ENCODE measurements at regions of chr2 and their contacts with region 1.

Region 1: DNA sequence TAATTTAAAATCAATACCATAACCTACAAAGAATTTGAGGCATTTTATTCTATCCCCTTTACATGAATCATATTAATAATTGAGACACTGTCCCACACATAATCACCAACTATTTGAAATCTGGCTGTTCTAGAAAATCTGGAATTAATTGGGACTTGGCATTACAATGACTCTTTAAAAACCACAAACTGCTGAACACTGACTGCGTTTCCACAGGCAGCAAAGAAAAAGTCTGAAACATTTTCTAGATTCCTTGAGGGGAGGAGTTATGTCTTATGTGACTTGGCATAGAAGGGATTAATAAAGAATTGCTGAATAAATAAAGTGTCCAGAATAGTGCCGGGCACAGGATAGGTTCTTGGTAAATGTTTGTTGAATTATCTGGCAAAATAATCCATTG is 61.4 kb downstream of the GPR39 start:
- DNase-seq: no peak
- H3K4me3 ChIP-seq: no peak overlapping the region
- H3K27ac ChIP-seq: no peak overlapping the region
- H3K4me1 ChIP-seq: no peaks in the 10 kb centered on the region
- H3K27me3 ChIP-seq: no peaks in the 10 kb centered on the region
- CTCF ChIP-seq: no peak
- EP300 ChIP-seq: no peak
- POLR2A ChIP-seq: no peak

Region 2: DNA sequence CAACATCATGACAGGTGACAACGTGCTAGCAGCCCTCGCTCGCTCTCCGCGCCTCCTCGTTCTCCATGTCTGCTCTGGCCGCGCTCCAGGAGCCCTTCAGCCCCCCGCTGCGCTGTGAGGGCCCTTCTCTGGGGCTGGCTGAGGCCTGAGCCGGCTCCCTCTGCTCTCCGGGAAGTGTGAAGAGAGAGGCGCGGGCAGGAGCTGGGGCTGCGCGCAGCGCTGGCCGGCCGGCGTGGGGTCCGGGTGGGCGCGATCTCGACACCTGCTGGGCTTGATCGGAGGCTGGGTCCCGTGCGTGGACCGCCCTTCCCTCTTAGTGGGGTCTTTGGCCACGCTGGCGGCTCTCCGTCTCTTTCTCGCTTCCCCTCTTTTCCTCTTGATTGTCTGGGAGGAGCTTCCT is 511.7 kb before region 1 on chr2:
- in situ Hi-C with region 1: no loop called
- intact Hi-C with region 1: no loop called
- DNase-seq: no peak
- H3K4me3 ChIP-seq: no peak overlapping the region
- H3K27ac ChIP-seq: no peak overlapping the region
- H3K4me1 ChIP-seq: no peaks in the 10 kb centered on the region
- H3K27me3 ChIP-seq: no peaks in the 10 kb centered on the region
- CTCF ChIP-seq: no peak
- EP300 ChIP-seq: no peak
- POLR2A ChIP-seq: no peak

Region 3: DNA sequence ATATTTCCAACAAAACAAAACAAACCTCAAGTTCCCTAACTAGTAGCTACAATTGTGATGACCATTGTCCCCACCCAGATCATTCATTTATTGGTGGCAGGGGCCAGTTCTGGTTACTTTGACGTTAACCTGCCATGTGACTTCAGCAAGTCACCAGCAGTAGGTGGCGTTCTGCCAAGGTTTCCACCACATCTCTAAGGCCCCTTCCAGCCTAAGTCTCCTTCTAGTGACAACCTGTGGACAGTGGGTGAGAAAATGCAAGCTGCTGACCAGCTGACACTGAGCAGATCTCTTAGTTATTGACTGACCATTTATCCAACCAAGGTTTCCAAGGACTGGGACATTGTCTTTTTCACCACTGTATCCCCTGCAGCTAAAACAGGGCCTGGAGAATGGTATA is 37.0 kb after region 1 on chr2:
- in situ Hi-C with region 1: no loop called
- intact Hi-C with region 1: loop called (anchors 1 kb)
- DNase-seq: no peak
- H3K4me3 ChIP-seq: no peak overlapping the region
- H3K27ac ChIP-seq: no peak overlapping the region
- H3K4me1 ChIP-seq: no peaks in the 10 kb centered on the region
- H3K27me3 ChIP-seq: no peaks in the 10 kb centered on the region
- CTCF ChIP-seq: no peak
- EP300 ChIP-seq: no peak
- POLR2A ChIP-seq: no peak

Region 4: GRCh38 chr2:132790207-132790785 is 312.3 kb after region 1 on chr2:
- in situ Hi-C with region 1: no loop called
- intact Hi-C with region 1: no loop called
- DNase-seq: no peak
- H3K4me3 ChIP-seq: no peak overlapping the region
- H3K27ac ChIP-seq: no peak overlapping the region
- H3K4me1 ChIP-seq: no peaks in the 10 kb centered on the region
- H3K27me3 ChIP-seq: no peaks in the 10 kb centered on the region
- CTCF ChIP-seq: no peak
- EP300 ChIP-seq: no peak
- POLR2A ChIP-seq: no peak

Region 5: DNA sequence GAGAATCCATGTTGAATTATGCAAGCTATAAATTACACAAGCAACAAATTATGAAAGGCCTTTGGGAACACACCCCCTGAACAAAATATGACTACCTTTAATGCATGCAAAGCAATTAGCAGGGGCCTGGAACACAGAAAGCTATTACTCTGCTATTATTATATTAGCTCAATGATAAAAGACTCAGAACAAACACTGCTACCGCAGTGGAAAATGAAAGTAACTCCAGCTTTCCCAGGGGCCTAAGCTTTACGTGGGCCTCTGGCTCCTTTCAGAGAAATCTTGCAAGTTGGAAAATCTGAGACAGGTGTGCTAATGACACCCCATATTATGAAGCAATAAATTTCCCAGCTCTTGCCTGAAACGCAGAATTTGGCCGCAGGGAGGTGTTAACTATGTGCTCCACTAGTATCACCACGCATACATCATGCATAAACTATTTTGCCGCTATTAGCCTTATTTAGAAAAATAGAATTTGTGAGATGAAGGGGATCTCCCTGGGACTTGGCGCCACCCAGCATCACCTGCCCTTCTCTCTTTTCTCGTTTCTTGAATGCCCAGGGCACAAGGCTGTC is 513.6 kb after region 1 on chr2:
- in situ Hi-C with region 1: no loop called
- intact Hi-C with region 1: no loop called
- DNase-seq: no peak
- H3K4me3 ChIP-seq: no peak overlapping the region
- H3K27ac ChIP-seq: no peak overlapping the region
- H3K4me1 ChIP-seq: no peaks in the 10 kb centered on the region
- H3K27me3 ChIP-seq: no peaks in the 10 kb centered on the region
- CTCF ChIP-seq: no peak
- EP300 ChIP-seq: no peak
- POLR2A ChIP-seq: no peak